Activated CD4-positive, alpha-beta memory T cell treated with anti-CD3 and anti-CD28 coated beads, Interleukin-2, amount 10 ng/mL, durations not matched to agents 7 days and 5 days (primary cell): ENCODE measurements at regions of chr7 and their contacts with region 1.

Region 1: DNA sequence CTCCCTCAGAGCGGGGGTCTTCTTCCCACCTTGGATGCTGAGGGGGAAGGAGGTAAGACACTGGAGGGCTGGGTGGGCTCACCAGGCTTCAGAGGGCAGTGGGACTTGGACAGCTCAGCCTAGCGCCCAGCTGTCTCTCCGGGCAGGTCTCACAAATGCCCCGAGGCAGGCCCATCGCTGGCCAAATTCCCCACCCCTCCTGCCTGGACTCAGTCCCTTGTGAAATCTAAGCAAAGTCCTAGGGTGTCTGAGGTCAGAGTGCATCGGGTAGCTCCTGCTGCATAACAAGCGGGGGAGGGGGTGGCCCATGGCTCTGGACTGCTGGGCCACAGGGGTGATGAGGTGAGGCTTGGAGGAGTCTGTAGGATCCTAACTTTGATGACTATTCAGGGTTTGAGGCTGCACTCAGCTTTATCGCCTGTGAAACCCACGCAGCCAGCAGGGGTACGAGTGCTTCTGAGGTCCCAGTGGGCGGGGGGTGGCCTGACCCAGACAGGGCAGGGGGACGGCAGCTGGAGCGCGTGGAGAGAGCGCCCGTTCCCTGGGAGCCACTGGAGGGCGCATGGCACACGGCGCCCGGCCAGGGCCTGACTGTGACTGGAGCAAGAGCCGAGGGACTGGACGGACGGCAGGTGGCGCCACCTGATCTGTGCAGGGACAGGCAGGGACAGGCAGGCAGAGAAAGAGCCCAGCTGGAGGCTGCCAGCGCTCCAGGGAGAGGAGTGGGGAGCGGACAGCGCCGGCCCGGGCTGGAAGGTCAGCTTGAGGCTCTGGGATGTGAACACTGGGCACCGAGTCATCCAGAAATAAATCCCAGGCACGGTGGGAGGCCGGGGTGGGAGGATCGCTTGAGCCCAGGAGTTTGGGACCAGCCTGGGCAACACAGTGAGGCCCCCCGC is 10.0 kb downstream of the CYP2W1 start:
- DNase-seq: peak; percentile 96
- H3K4me3 Mint-ChIP-seq: no peak overlapping the region
- H3K27ac Mint-ChIP-seq: no peak overlapping the region
- H3K4me1 Mint-ChIP-seq: peaks cover 3% of the 10 kb centered on the region
- H3K27me3 Mint-ChIP-seq: no peaks in the 10 kb centered on the region

Region 2: DNA sequence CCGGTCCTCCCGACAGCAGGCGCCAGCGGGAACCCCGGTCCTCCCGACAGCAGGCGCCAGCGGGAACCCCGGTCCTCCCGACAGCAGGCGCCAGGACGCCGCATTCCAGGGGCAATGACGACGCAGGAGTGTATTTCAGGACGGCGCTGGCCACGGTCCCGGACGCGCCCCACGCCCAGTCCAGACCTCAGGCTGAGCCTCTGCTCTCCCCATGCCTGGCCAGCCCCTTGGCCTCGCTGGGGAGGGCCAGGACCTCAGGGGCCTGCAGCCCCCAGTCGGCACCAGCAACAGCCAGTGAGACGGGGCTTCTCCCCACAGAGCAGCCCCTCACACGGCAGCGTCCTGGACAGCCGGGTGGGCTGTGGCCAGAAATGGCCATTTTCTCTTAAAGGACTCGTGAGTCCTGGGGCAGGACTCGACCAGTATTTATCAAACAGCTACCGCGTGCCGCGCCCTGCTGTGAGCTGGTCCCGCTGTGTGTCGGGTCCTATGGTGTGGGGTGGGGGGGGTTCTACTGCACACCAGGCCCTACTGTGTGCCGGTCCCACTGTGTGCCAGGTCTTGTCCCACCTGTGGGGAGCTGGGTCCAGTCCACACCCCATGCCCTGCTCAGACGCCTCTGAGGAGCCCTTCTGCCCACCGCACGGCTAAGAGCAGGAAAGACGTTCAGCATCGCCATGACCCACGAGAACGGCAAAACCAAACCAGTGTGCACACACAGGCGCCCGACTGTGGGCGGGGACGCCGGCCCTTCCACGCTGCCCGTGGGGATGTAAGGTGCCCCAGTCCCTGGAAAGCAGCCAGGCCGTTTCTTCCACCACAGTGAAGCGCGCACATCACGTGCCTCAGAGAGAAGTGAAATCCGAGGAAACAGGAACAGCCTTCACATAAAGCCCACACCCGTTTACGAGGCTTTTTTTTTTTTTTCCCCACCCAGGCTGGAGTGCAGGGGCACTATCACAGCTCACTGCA is 83.3 kb before region 1 on chr7:
- CTCF ChIA-PET with region 1: interaction called, 12 read pairs
- POLR2A ChIA-PET with region 1: no interaction called
- DNase-seq: no peak
- H3K4me3 Mint-ChIP-seq: no peak overlapping the region
- H3K27ac Mint-ChIP-seq: no peak overlapping the region
- H3K4me1 Mint-ChIP-seq: peaks cover 9% of the 10 kb centered on the region
- H3K27me3 Mint-ChIP-seq: peaks cover 9% of the 10 kb centered on the region

Region 3: GRCh38 chr7:1044191-1045068 is 51.5 kb after region 1 on chr7 and contains the start of gene GPR146:
- CTCF ChIA-PET with region 1: interaction called, 28 read pairs
- POLR2A ChIA-PET with region 1: interaction called, 3 read pairs
- DNase-seq: peak; percentile 93
- H3K4me3 Mint-ChIP-seq: peak within 1 kb of the TSS; percentile 89
- H3K27ac Mint-ChIP-seq: peak within 1 kb of the TSS; percentile 87
- H3K4me1 Mint-ChIP-seq: peaks cover 71% of the 10 kb centered on the region
- H3K27me3 Mint-ChIP-seq: no peaks in the 10 kb centered on the region
- total RNA-seq, gene GPR146: 10.0 to 10.1 TPM

Region 4: DNA sequence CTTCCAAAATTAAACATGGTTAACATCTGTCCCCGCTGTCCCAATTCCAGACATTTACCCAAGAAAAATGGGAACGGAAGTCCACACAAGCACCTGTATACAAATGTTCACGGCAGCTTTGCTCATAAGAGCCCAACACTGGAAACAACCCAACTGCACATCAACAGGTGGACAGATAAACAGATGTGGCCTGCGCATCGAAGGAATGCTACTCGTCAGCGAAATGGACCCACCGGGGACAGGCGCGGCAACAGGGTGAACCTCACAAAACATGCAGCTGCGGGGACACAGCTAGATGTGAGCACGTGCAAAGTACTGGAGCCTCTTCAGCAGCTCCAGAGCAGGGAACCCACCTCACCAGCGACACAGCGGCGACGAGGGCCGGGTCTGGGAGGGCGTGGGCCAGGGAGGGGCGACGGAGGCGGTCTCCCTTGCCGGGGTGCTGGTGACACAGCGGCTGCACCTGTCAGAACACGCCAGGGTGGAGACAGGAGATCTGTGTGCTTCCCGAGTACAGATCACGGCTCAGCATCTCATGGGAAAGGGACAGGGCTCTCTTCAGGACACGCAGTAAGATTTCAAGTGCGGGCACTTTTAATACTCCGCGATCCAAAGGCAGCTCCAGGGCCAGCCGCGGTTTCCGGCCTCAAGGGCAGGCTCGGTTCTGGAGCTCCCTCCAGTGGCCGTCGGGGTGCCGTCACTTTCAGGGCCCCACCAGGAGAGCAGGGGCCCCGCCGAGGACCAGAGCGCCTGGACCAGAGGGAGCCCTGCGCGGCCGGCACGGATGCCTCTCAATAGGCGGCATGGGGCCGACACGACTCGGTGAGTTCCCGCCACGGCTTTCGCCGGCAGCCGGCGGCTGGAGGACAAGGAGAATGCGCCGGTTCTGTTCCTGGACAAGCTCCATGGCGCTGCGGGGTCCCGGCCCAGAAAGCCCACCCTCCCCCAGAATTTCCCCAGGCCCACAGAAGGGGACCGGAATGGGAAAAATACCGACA is 72.6 kb after region 1 on chr7:
- CTCF ChIA-PET with region 1: interaction called, 270 read pairs
- POLR2A ChIA-PET with region 1: interaction called, 28 read pairs
- DNase-seq: peak; percentile 89
- H3K4me3 Mint-ChIP-seq: no peak overlapping the region
- H3K27ac Mint-ChIP-seq: no peak overlapping the region
- H3K4me1 Mint-ChIP-seq: peaks cover 6% of the 10 kb centered on the region
- H3K27me3 Mint-ChIP-seq: peaks cover 1% of the 10 kb centered on the region

Region 5: GRCh38 chr7:1086588-1087464 is 93.9 kb after region 1 on chr7:
- CTCF ChIA-PET with region 1: interaction called, 11 read pairs
- POLR2A ChIA-PET with region 1: no interaction called
- DNase-seq: peak; percentile 78
- H3K4me3 Mint-ChIP-seq: peak overlapping the region; percentile 52
- H3K27ac Mint-ChIP-seq: no peak overlapping the region
- H3K4me1 Mint-ChIP-seq: peaks cover 8% of the 10 kb centered on the region
- H3K27me3 Mint-ChIP-seq: peaks cover 2% of the 10 kb centered on the region

Region 6: GRCh38 chr7:1175967-1176851 is 183.3 kb after region 1 on chr7:
- CTCF ChIA-PET with region 1: interaction called, 37 read pairs
- POLR2A ChIA-PET with region 1: interaction called, 8 read pairs
- DNase-seq: peak; percentile 86
- H3K4me3 Mint-ChIP-seq: peak overlapping the region; percentile 61
- H3K27ac Mint-ChIP-seq: peak overlapping the region; percentile 78
- H3K4me1 Mint-ChIP-seq: peaks cover 20% of the 10 kb centered on the region
- H3K27me3 Mint-ChIP-seq: peaks cover 11% of the 10 kb centered on the region